IMR-90 (cell line): ENCODE measurements at regions of chr1 and their contacts with region 1.

Region 1: DNA sequence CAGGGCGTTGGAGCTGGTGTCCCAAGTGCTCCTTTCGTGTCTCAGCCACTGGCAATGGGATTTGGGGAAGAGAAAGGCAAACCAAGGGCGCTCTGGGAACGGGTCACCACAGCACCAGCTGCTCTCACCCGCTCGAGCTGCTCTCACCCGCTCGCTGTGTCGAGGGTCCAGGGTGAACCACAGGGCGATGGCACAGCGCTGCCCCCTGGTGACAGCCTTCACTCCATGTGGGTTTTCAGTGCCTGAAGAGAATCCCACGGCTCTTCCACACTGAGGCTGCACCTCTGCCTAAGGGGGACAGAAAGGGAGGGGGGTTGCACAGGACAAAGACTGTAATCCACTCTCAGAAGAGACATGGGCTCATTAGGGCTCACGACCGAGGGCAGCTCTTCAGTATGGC is 7.1 kb upstream of the CLDN19 start:
- DNase-seq: no peak
- ATAC-seq: peak; percentile 52; the same call in 1 of the 2 replicates
- H3K4me3 ChIP-seq: no peak overlapping the region
- H3K27ac ChIP-seq: no peak overlapping the region
- H3K4me1 ChIP-seq: no peaks in the 10 kb centered on the region
- H3K27me3 ChIP-seq: no peaks in the 10 kb centered on the region
- CTCF ChIP-seq: peak; percentile 46
- POLR2A ChIP-seq: no peak
- RAD21 ChIP-seq: peak; percentile 39

Region 2: DNA sequence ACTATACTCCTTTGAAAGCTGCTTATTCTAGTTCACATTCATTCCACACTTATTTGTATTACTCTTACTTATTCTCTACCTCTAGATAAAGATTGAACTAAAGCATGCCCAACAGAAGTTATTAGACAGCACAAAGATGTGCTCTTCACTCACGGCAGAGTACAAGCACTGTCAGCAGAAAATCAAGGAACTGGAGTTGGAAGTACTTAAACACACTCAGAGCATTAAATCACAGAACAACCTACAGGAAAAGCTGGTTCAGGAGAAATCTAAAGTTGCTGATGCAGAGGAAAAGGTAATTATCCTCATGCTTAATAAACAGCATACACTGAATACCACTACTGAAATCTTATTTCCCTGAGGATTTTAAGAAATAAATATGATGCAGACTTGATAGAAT is 170.2 kb before region 1 on chr1:
- CTCF ChIA-PET with region 1: interaction called, 4 read pairs
- POLR2A ChIA-PET with region 1: no interaction called
- dilution Hi-C with region 1: no loop called
- in situ Hi-C with region 1: no loop called
- intact Hi-C with region 1: loop called (anchors 1 kb)
- DNase-seq: no peak
- ATAC-seq: no peak
- H3K4me3 ChIP-seq: no peak overlapping the region
- H3K27ac ChIP-seq: no peak overlapping the region
- H3K4me1 ChIP-seq: no peaks in the 10 kb centered on the region
- H3K27me3 ChIP-seq: peaks cover 3% of the 10 kb centered on the region
- CTCF ChIP-seq: no peak
- POLR2A ChIP-seq: no peak
- RAD21 ChIP-seq: no peak